Endothelial cell of umbilical vein (primary cell): ENCODE measurements at regions of chr10 and their contacts with region 1.

Region 1: GRCh38 chr10:46030091-46030937 is at the start of gene NCOA4:
- DNase-seq: peak; percentile 98
- H3K4me3 ChIP-seq: peak within 1 kb of the TSS; percentile 75 to 94 (median 85)
- H3K27ac ChIP-seq: peak within 1 kb of the TSS; percentile 71
- H3K4me1 ChIP-seq: peaks cover 36% of the 10 kb centered on the region
- H3K27me3 ChIP-seq: no peaks in the 10 kb centered on the region
- CTCF ChIP-seq: peak; percentile 74 to 78
- POLR2A ChIP-seq: peak; percentile 97
- total RNA-seq, gene NCOA4: 119 and 127 TPM in 2 replicates

Region 2: GRCh38 chr10:46006219-46006618 is 24.1 kb before region 1 on chr10:
- CTCF ChIA-PET with region 1: interaction called, 15 read pairs
- POLR2A ChIA-PET with region 1: no interaction called
- dilution Hi-C with region 1: no loop called
- intact Hi-C with region 1: no loop called
- DNase-seq: peak; percentile 18
- H3K4me3 ChIP-seq: no peak overlapping the region
- H3K27ac ChIP-seq: peak overlapping the region; percentile 3
- H3K4me1 ChIP-seq: peaks cover 6% of the 10 kb centered on the region
- H3K27me3 ChIP-seq: no peaks in the 10 kb centered on the region
- CTCF ChIP-seq: no peak
- POLR2A ChIP-seq: no peak

Region 3: DNA sequence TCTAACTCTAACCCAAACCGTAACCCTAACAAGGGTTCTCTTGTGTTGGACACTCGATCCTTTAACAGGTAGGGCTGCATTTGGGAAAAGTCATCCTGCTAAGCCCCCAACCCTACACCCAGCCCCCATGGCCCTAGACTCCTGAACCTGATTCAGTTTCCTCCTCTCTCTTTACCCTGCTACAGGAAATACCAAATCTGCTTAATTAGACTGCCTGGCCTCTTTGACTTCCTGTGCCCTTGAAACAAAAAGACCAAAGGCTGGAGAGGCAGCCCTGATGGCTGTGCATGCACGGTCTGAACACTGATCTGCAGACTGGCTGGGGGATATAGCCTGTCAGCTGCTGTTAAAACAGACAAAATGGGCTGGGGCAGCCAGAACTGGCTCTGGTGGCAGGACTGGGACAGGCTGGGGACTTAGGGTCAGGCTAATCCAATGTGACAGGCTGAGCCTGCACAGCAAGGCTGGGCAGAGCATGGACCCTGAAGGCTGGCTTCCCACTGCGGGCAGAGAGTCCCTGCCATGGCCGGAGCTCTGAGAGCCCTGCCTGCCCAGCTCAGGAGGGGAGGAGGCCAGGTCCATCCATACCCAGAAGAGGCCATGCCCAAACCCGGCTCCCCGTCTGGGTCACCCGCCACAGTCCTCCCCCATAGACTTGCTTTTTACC is 66.7 kb after region 1 on chr10:
- CTCF ChIA-PET with region 1: no interaction called
- POLR2A ChIA-PET with region 1: no interaction called
- dilution Hi-C with region 1: no loop called
- intact Hi-C with region 1: loop called (anchors 2 kb)
- DNase-seq: peak; percentile 23
- H3K4me3 ChIP-seq: no peak overlapping the region
- H3K27ac ChIP-seq: no peak overlapping the region
- H3K4me1 ChIP-seq: peaks cover 12% of the 10 kb centered on the region
- H3K27me3 ChIP-seq: no peaks in the 10 kb centered on the region
- CTCF ChIP-seq: no peak
- POLR2A ChIP-seq: no peak

Region 4: DNA sequence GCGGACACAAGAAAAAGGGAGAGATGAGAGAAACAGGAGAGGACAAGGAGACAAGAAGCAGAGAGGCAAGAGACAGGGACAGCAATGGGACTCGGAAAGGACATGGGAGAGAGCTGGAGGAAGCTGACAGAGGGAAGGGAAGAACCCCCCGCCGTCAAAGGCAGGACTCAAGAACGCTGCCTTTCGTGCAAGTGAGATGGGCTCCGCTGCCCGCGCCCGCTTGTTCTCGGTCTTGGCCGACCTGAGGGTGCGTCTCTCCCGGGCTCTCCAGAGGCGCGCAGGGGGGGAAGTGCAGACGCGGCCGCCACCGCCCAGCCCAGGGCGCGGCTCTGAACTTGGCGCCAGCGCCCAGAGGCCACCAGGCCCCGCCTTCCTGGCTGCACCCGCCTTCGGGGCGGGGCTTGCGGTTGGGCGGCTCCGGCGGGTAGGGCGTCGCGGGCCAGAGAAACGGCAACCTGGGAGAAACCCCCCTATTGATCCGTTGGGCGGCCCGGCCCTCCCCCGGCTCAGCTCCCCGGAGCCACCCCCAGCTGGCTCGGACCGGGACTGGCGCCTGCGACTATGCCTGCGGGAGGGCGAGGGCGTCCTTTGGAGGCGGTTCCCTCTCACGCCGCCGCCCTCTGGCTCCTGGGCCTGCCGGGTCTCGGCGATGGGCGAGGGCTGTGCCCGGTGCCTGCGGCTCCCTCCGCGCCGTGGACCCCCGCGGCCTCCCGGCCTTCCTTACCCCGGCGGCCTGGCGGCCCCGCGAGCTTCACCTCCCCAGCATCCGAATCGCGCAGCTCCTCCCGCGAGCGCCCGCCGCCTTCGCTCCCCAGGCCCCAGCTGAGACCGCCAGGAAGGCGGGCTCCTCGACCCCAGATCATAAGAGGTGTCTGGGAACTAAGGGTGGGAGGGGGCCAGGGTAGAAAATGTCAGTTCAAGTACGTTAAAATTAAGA is 254.2 kb after region 1 on chr10:
- CTCF ChIA-PET with region 1: no interaction called
- POLR2A ChIA-PET with region 1: no interaction called
- dilution Hi-C with region 1: no loop called
- intact Hi-C with region 1: no loop called
- DNase-seq: peak; percentile 61
- H3K4me3 ChIP-seq: peak overlapping the region; percentile 32 to 74 (median 59)
- H3K27ac ChIP-seq: no peak overlapping the region
- H3K4me1 ChIP-seq: peaks cover 4% of the 10 kb centered on the region
- H3K27me3 ChIP-seq: peaks cover 9% of the 10 kb centered on the region in 2 experiments
- CTCF ChIP-seq: no peak
- POLR2A ChIP-seq: no peak